MCF 10A (cell line): ENCODE measurements at regions of chr1 and their contacts with region 1.

Region 1: DNA sequence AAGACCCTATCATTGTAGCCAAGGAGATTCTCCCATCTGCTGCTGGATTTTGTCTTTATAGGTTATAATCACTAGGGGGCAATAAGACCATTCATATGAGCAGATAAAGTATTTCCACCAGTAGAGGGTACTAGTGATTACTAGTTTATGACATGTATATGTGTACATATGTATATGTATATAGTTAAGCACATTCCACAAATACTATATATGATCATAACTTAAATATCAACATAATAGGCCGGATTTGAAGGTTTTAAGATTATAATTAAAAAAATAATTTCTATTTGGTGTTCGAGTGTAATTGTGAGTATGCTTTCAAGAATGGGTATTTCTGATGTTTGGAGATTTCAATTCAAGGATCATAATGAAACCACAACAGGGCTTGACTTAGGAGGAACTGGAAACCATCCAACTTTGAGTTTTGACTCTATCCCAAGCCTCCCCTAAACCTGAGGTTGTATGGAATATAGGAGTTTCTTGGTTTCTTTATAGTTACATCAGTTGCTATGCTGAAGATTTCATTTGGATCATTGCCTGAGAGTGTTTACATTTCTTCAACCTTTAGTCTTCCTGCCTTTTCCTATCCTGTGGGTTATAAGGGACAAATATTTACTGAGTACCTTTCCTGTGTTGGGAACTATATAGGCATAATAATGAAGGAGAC is 16.9 kb downstream of the TCEANC2 start:
- DNase-seq: peak; percentile 51
- H3K4me3 Mint-ChIP-seq: no peak overlapping the region
- H3K27ac Mint-ChIP-seq: no peak overlapping the region
- H3K4me1 Mint-ChIP-seq: no peaks in the 10 kb centered on the region
- H3K27me3 Mint-ChIP-seq: no peaks in the 10 kb centered on the region
- CTCF ChIP-seq: peak; percentile 75

Region 2: GRCh38 chr1:53968125-53968513 is 102.2 kb before region 1 on chr1:
- CTCF ChIA-PET with region 1: no interaction called
- POLR2A ChIA-PET with region 1: no interaction called
- intact Hi-C with region 1: no loop called
- DNase-seq: no peak
- H3K4me3 Mint-ChIP-seq: no peak overlapping the region
- H3K27ac Mint-ChIP-seq: no peak overlapping the region
- H3K4me1 Mint-ChIP-seq: peaks cover 9% of the 10 kb centered on the region
- H3K27me3 Mint-ChIP-seq: no peaks in the 10 kb centered on the region
- CTCF ChIP-seq: no peak

Region 3: DNA sequence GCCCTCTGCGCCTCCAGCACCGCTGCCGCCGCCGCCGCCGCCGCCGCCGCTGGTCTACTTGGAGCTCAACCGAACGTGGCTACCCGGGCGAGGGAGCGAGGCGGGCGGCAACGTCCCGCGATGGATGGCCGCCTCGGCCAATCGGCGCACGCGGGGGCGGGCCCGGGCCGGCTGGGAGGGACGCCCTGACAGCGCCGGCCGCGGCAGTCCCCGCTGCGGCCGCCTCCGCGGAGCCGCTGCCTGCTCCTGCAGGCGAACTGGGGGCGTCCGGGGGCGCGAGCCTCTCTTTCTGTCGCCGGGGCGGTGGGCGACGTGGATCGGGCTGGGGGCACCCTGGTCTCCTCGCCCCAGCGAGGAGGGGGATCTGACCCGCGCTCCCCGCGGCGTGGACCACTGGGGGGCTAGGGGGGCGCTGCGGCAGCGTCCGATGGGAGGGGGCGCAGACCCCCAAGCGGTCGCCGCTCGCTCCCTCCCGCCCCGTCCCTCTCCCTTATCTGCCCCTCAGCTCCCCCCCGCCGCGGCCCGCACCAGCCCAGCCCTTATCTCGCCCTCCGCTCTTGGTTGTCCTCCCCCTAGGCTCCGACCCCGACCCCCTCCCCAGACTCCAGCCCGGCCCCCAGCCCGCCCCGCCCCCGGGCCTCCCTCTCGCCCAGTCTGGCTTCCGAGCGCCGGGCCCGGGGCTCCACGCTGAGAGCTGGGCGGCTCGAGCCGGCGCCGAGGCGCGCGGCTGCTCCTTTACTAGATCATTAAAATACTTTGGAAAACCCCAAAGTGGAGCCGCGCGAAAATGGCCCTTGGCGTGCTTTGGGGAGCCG is 336.2 kb after region 1 on chr1 and contains the start of gene SSBP3:
- CTCF ChIA-PET with region 1: interaction called, 4 read pairs
- POLR2A ChIA-PET with region 1: interaction called, 4 read pairs
- intact Hi-C with region 1: loop called (anchors 5 kb)
- DNase-seq: peak; percentile 91
- H3K4me3 Mint-ChIP-seq: peak within 1 kb of the TSS; percentile 83
- H3K27ac Mint-ChIP-seq: peak within 1 kb of the TSS; percentile 96
- H3K4me1 Mint-ChIP-seq: peaks cover 28% of the 10 kb centered on the region
- H3K27me3 Mint-ChIP-seq: no peaks in the 10 kb centered on the region
- CTCF ChIP-seq: no peak
- total RNA-seq, gene SSBP3: 6.5 and 8.6 TPM in 2 replicates

Region 4: DNA sequence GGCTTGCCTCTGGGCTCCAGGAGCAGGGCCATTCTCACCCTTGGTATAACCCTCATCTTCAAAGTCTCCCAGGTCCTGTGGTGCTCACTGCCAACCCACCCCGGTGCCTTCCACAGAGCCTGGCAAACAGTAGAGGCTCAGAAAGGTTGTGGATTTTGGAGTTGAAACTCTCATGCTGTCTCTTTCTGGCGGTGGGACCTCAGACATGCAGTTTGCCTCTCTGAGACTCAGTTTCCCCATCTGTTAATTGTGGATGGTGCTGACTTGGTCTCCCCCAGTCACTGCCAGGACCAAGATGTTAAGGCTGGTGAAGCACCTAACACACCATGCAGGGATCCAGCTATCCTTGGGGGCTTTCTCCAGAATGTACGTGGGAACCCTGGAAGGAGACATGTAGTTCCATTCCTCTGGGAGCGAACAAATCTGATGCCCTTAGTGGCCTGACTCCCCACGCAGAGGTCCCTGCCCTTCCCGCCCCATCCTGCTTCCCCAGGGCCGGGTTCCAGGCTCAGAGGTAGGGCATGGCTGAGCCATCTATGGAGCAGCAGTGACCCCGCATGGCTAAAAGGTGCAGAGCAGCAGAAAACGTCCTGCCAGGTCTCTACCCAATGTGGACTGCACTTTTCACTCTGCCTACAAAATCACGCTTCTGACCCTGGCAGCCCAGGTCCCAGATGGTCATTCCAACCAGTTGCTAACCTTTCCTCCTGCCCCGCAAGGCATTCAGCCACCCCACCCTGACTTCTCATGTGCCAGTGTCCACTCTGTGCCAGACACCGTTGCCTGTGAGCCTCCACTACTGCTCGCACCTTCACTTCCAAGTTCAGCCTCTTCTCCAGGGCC is 740.0 kb after region 1 on chr1:
- CTCF ChIA-PET with region 1: interaction called, 3 read pairs
- POLR2A ChIA-PET with region 1: no interaction called
- intact Hi-C with region 1: loop called (anchors 1 kb)
- DNase-seq: peak; percentile 69
- H3K4me3 Mint-ChIP-seq: no peak overlapping the region
- H3K27ac Mint-ChIP-seq: no peak overlapping the region
- H3K4me1 Mint-ChIP-seq: peaks cover 9% of the 10 kb centered on the region
- H3K27me3 Mint-ChIP-seq: no peaks in the 10 kb centered on the region
- CTCF ChIP-seq: peak; percentile 89